ENCODE measurements at regions of chr19 and their contacts with region 1.

Region 1: DNA sequence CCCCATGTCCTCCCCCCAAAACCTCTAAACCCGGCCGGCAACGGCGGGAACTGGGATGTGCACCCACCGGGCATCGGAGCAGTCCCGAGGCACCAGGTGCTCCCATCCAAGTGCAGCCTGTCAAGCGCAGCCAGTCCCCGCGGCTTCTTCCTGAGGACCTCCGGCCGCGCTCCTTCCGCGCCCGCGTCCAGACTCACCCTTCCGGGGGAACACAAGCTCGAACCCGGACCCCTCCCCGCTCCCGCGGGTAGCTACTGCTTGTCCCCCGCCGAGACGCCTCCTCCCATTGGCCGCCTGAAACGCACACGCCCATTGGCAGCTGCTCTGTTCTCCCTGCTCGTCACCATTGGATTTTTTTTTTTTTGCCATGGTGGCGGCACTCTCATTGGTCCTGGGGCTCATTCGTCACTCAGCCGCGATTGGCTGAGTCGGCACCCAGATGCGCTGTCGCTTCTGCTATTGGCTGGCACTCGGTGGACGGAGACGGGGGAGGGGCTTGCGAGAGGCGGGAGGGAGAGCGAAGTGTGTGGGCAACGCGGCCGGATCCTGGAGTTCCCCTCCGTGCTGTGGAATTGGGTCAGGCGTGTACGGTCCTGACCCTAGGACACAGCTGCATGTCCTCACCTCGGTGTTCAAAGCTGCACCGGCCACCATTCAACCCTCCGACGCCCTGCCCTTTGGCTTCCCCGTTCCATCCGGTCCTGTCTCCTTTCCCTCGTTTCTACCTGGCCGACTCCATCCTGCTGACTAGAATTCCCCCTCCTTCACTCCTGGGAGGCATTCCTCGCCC is at the start of gene TYK2:
- DNase-seq: peak; percentile 100
- CTCF ChIP-seq: no peak

Region 2: GRCh38 chr19:10670182-10670581 is 289.7 kb after region 1 on chr19:
- CTCF ChIA-PET with region 1: no interaction called
- POLR2A ChIA-PET with region 1: interaction called, 10 read pairs
- DNase-seq: no peak
- CTCF ChIP-seq: no peak

Measured in GM10248 (cell line).